ENCODE measurements at regions of chr15 and their contacts with region 1.

Region 1: DNA sequence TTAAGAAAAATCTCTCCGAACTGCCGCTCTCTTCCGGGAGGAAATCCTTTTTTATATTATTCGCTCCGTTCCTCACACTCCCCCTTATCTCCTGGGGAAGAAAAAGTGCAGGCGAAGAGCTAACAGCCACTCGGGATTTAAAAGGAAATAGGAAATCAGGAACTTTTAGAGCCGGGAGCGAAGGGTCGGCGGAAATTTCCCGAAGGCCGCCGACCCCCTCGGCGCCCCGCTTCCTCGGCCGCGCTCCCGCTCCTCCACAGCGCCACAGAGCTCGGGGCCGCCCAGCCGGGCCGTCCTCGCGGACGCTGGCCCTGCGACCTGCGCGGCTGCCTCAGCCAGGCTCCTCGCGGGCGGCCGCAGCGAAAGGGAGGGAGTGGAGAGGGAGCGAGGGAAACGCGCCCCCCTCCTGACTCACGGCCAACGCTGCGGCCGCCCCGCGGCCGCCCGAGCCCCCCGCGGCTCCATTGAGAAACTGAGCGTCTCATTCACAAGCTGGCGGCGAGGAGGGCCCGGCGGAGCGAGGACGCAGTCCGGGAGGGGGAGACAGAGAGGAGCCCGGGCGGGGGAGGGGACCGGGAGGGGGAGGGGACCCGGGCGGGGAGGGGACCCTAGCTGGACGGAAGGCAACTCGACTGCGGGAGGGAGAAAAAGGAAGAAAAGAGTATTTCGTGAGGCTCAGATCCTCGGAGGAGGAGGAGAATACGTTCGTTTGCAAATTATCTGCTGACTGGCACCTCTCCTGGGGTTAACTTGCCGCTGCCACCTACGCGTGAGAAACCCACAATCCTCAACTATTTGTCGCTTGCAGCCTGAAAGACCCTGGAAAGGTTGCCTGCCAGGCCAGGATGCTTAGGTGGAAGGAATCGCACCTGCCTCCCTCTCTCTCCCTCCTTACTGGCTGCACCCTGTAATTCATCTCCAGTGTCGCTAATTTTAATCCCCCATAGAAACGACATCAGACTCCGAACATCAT is at the start of gene PTPN9:
- DNase-seq: peak; percentile 81 to 90
- ATAC-seq: peak; percentile 86 to 94 (median 90)
- H3K4me3 ChIP-seq: peak within 1 kb of the TSS; percentile 98
- H3K27ac ChIP-seq: peak within 1 kb of the TSS; percentile 84
- H3K4me1 ChIP-seq: peaks cover 15% of the 10 kb centered on the region
- H3K27me3 ChIP-seq: no peaks in the 10 kb centered on the region
- CTCF ChIP-seq: peak; percentile 41
- total RNA-seq, gene PTPN9: 5.5 to 6.9 (median 5.7) TPM

Region 2: GRCh38 chr15:75453703-75454470 is 125.3 kb before region 1 on chr15:
- intact Hi-C with region 1: loop called in 1 of 2 experiments (anchors 2 kb)
- DNase-seq: peak; percentile 98 to 99
- ATAC-seq: peak; percentile 65 to 74 (median 70)
- H3K4me3 ChIP-seq: peak overlapping the region; percentile 96
- H3K27ac ChIP-seq: peak overlapping the region; percentile 99
- H3K4me1 ChIP-seq: peaks cover 15% of the 10 kb centered on the region
- H3K27me3 ChIP-seq: no peaks in the 10 kb centered on the region
- CTCF ChIP-seq: no peak